MCF 10A (cell line): ENCODE measurements at regions of chr20 and their contacts with region 1.

Region 1: GRCh38 chr20:31260326-31260932 is 3.0 kb downstream of the DEFB115 start:
- DNase-seq: peak; percentile 27
- H3K4me3 Mint-ChIP-seq: no peak overlapping the region
- H3K27ac Mint-ChIP-seq: no peak overlapping the region
- H3K4me1 Mint-ChIP-seq: no peaks in the 10 kb centered on the region
- H3K27me3 Mint-ChIP-seq: no peaks in the 10 kb centered on the region
- CTCF ChIP-seq: peak; percentile 58

Region 2: DNA sequence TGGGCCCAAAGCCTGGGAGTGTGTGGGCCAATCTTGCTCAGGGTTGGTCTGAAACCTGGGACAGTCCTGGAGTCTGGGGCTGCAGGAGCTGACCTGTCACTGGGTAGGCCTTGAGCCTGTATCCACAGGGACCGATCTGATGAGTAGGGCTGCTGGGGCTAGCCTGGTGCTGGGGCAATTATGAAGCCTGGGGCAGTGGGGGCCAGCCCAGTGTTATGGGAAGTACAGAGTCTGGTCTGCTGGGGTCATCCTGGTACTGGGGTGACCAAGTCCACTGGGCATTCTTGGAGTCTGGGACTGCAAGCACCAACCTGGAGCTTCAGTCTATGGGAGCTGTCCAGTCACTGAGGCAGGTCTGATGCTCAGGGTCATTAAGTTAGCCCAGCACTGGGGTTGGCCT is 17.7 kb after region 1 on chr20:
- CTCF ChIA-PET with region 1: interaction called, 12 read pairs
- POLR2A ChIA-PET with region 1: no interaction called
- intact Hi-C with region 1: no loop called
- DNase-seq: no peak
- H3K4me3 Mint-ChIP-seq: no peak overlapping the region
- H3K27ac Mint-ChIP-seq: no peak overlapping the region
- H3K4me1 Mint-ChIP-seq: no peaks in the 10 kb centered on the region
- H3K27me3 Mint-ChIP-seq: no peaks in the 10 kb centered on the region
- CTCF ChIP-seq: no peak

Region 3: GRCh38 chr20:31833130-31833930 is 572.9 kb after region 1 on chr20:
- CTCF ChIA-PET with region 1: no interaction called
- POLR2A ChIA-PET with region 1: no interaction called
- intact Hi-C with region 1: no loop called
- DNase-seq: peak; percentile 59
- H3K4me3 Mint-ChIP-seq: no peak overlapping the region
- H3K27ac Mint-ChIP-seq: no peak overlapping the region
- H3K4me1 Mint-ChIP-seq: peaks cover 6% of the 10 kb centered on the region
- H3K27me3 Mint-ChIP-seq: peaks cover 21% of the 10 kb centered on the region
- CTCF ChIP-seq: peak; percentile 91